ENCODE measurements at regions of chr2 and their contacts with region 1.

Region 1: DNA sequence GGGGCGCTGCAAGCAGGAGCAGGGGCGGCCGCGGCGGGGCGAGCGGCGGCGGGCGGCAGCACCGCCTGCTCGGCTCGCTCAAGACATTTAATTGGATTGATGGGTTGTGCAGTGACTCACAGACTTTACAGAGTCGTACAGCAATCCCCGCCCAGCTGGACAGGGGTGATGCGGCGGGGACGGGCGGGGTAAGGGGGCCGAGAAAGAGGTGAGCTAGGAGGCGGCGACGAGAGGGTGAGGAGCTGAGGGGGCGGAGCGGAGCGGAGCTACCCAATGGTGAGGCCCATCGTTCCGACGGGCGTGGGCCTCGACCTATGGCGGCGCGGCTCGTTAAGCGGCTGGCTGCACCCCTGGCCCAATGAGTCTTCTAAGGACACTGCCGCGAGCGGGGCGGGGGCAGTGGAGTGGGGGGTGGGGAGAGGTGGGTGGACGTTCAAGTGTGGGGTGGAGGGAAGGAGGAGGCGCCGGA is 97.1 kb upstream of the SERTAD2 start:
- DNase-seq: peak; percentile 99 to 100
- ATAC-seq: peak; percentile 81

Region 2: DNA sequence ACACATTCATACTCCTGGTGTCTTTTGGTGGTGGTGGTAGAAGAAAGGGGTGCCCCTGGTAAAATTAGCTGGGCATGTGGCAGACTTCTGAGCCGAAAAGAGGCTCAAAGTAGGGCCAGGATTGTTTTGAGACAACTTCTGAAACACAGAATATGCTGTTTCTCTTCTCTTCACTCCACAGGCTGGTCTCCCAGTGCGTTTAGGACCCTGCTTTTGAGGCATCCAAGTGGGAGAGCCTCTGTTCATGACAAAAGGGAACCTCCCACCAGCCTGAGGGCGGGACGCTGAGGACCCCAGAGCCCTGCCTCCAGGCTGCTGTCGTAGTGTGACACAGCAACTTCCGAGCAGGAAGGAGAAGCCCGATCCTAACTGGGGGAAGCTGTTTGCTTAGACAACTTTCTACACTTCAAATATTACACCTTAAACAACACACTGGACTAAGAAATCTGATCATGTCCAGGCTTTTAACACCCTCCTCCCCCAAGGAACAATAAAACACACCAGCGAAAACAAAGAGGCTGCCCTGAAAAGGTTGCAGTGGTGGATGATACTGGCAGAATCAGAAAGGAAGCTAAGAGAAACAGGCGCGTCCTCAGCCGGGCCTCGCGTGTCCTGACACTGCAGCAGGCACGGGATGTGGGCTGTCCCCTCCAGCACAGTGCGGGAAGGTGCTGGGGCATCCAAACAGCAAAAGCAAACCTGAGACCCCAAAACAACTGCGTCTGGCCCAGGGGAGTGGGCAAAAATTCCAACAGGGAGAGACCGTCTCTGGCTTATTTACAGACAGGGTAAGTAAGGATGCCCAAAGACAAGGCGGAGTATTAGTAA is 106.5 kb before region 1 on chr2:
- intact Hi-C with region 1: loop called in 1 of 2 experiments (anchors 5 kb)
- DNase-seq: peak; percentile 76 to 84
- ATAC-seq: peak; percentile 62